PC-9 (cell line): ENCODE measurements at regions of chr2 and their contacts with region 1.

Region 1: GRCh38 chr2:172282944-172283343 is 144.4 kb upstream of the ITGA6 start:
- DNase-seq: no peak
- H3K4me3 ChIP-seq: no peak overlapping the region
- H3K27ac ChIP-seq: no peak overlapping the region
- H3K4me1 ChIP-seq: peaks cover 12% of the 10 kb centered on the region
- H3K27me3 ChIP-seq: no peaks in the 10 kb centered on the region
- CTCF ChIP-seq: no peak

Region 2: DNA sequence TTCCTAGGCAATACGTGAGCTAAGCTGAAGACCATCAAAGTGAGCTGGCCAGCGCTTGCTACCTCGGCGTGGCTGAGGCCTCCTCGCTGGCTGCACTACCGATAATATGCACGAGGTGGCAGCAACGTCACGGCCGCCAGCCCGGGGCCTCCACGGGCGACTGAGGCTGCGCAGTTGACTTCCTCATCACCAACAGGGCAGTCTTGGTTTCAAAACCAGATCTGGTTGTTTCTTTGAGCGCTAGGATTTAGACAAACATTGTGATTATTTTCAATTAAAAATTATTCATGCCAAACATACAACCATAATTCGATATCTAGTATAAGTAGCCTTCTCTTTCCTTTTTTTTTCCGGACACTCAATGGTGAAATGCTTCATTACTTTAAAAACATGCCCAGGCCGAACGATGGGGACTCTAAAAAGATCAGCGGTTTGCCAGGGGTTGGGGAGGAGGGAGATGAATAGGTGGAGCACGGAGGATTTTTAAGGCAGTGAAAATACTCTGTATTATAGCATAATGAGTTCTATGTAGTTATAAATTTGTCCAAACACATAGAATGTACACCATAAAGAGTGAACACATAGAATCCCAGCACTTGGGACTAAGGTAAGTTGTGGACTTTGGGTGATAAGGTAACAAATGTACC is 708.7 kb before region 1 on chr2:
- CTCF ChIA-PET with region 1: interaction called, 14 read pairs
- POLR2A ChIA-PET with region 1: no interaction called
- intact Hi-C with region 1: no loop called
- DNase-seq: peak; percentile 55 to 86
- H3K4me3 ChIP-seq: no peak overlapping the region
- H3K27ac ChIP-seq: no peak overlapping the region
- H3K4me1 ChIP-seq: no peaks in the 10 kb centered on the region
- H3K27me3 ChIP-seq: no peaks in the 10 kb centered on the region
- CTCF ChIP-seq: peak; percentile 98